ENCODE measurements at regions of chr10 and their contacts with region 1.

Region 1: DNA sequence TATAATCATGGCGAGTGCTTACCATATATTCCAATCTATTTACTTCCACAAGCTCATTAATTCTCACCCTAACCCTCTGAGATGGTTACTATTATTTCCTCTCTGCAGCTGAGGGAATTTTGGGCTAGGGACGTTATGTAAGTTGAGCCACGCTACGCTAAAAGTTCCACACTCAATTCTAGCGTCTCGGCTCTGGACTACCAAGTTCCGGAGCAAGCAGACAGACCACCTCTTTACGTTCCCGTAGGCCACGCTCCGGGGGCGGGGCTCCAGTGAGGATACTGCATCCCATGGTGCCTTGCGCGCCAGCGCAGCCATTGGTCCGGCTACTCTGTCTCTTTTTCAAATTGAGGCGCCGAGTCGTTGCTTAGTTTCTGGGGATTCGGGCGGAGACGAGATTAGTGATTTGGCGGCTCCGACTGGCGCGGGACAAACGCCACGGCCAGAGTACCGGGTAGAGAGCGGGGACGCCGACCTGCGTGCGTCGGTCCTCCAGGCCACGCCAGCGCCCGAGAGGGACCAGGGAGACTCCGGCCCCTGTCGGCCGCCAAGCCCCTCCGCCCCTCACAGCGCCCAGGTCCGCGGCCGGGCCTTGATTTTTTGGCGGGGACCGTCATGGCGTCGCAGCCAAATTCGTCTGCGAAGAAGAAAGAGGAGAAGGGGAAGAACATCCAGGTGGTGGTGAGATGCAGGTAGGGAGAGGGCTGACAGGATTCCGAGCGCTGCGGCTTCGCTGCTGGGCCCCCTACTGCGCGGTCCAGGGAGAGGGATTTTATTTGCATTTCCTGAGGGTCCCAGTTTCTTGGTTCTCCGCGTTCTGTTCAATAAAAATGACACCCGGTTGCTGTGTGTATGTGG is at the start of gene KIF11:
- DNase-seq: peak; percentile 94 to 99 (median 96)
- ATAC-seq: peak; percentile 87
- H3K4me3 ChIP-seq: peak within 1 kb of the TSS; percentile 62 to 82
- H3K4me3 Mint-ChIP-seq: peak within 1 kb of the TSS; percentile 97
- H3K27ac ChIP-seq: peak within 1 kb of the TSS; percentile 72 to 90
- H3K27ac Mint-ChIP-seq: peak within 1 kb of the TSS; percentile 99
- H3K4me1 ChIP-seq: peaks cover 20% of the 10 kb centered on the region
- H3K4me1 Mint-ChIP-seq: peaks cover 28% of the 10 kb centered on the region
- H3K27me3 ChIP-seq: no peaks in the 10 kb centered on the region
- H3K27me3 Mint-ChIP-seq: peaks cover 5% of the 10 kb centered on the region
- CTCF ChIP-seq: no peak
- total RNA-seq, gene KIF11: 0.36 to 0.38 TPM

Region 2: DNA sequence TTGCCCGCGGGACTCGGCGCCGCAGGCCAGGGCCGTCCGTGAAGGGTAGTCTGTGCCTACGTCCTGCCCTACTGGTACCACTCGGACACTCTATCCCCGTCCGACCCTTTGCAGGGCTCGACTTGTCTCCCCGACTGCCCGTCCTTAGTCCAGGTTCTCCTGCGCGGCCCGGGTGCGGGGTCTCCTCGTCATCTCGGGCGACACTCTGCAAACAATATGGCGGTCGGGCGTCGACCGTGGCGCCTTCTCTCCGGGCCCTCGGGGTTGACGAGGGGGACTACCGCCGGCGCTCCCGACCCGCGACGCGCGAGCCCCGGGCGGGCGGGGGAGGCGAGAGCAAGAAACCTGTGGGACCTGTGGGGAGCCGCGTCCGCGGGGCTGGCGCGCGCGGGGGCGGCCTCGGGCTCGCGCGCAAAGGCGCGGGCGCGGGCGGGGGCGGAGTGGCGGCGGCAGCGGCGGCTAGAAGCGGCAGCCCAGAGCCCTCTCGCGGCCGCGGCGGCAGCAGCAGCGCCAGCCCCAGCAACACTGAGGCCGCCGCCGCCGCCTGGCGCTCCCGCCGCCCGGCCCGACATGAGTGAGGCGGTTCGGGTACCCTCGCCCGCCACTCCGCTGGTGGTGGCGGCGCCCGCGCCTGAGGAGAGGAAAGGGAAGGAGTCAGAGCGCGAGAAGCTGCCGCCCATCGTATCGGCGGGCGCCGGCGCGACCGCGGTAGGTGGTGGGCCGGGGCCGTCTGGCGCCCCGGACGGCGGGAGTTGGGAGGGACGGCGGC is 1182.9 kb before region 1 on chr10 and contains the start of gene HECTD2:
- CTCF ChIA-PET with region 1: no interaction called
- POLR2A ChIA-PET with region 1: no interaction called
- intact Hi-C with region 1: loop called in 1 of 2 experiments (anchors 5 kb)
- DNase-seq: peak; percentile 65 to 92 (median 82)
- ATAC-seq: peak; percentile 86
- H3K4me3 ChIP-seq: peak within 1 kb of the TSS; percentile 91 to 97
- H3K4me3 Mint-ChIP-seq: peak within 1 kb of the TSS; percentile 86
- H3K27ac ChIP-seq: peak within 1 kb of the TSS; percentile 90 to 95
- H3K27ac Mint-ChIP-seq: peak within 1 kb of the TSS; percentile 90
- H3K4me1 ChIP-seq: peaks cover 12% of the 10 kb centered on the region
- H3K4me1 Mint-ChIP-seq: peaks cover 13% of the 10 kb centered on the region
- H3K27me3 ChIP-seq: no peaks in the 10 kb centered on the region
- H3K27me3 Mint-ChIP-seq: no peaks in the 10 kb centered on the region
- CTCF ChIP-seq: peak; percentile 41
- total RNA-seq, gene HECTD2: 0.69 to 1.5 TPM

Region 3: GRCh38 chr10:91901784-91902677 is 691.0 kb before region 1 on chr10:
- CTCF ChIA-PET with region 1: no interaction called
- POLR2A ChIA-PET with region 1: no interaction called
- intact Hi-C with region 1: loop called in 1 of 2 experiments (anchors 1 kb)
- DNase-seq: peak in 6 of 9 experiments; percentile 32 to 78 (median 59)
- ATAC-seq: peak; percentile 98
- H3K4me3 ChIP-seq: no peak overlapping the region
- H3K4me3 Mint-ChIP-seq: no peak overlapping the region
- H3K27ac ChIP-seq: peak overlapping the region in 1 of 2 experiments; percentile 75
- H3K27ac Mint-ChIP-seq: peak overlapping the region; percentile 53
- H3K4me1 ChIP-seq: peaks cover 6% of the 10 kb centered on the region
- H3K4me1 Mint-ChIP-seq: peaks cover 23% of the 10 kb centered on the region
- H3K27me3 ChIP-seq: no peaks in the 10 kb centered on the region
- H3K27me3 Mint-ChIP-seq: peaks cover 3% of the 10 kb centered on the region
- CTCF ChIP-seq: no peak

Region 4: GRCh38 chr10:92240289-92241157 is 352.5 kb before region 1 on chr10:
- CTCF ChIA-PET with region 1: no interaction called
- POLR2A ChIA-PET with region 1: no interaction called
- intact Hi-C with region 1: loop called in 1 of 2 experiments (anchors 5 kb)
- DNase-seq: peak in 8 of 9 experiments; percentile 14 to 74 (median 32)
- ATAC-seq: peak; percentile 43
- H3K4me3 ChIP-seq: peak overlapping the region; percentile 65 to 82
- H3K4me3 Mint-ChIP-seq: peak overlapping the region; percentile 95
- H3K27ac ChIP-seq: peak overlapping the region; percentile 3 to 56
- H3K27ac Mint-ChIP-seq: peak overlapping the region; percentile 81
- H3K4me1 ChIP-seq: peaks cover 22% of the 10 kb centered on the region
- H3K4me1 Mint-ChIP-seq: peaks cover 40% of the 10 kb centered on the region
- H3K27me3 ChIP-seq: no peaks in the 10 kb centered on the region
- H3K27me3 Mint-ChIP-seq: no peaks in the 10 kb centered on the region
- CTCF ChIP-seq: no peak

Region 5: DNA sequence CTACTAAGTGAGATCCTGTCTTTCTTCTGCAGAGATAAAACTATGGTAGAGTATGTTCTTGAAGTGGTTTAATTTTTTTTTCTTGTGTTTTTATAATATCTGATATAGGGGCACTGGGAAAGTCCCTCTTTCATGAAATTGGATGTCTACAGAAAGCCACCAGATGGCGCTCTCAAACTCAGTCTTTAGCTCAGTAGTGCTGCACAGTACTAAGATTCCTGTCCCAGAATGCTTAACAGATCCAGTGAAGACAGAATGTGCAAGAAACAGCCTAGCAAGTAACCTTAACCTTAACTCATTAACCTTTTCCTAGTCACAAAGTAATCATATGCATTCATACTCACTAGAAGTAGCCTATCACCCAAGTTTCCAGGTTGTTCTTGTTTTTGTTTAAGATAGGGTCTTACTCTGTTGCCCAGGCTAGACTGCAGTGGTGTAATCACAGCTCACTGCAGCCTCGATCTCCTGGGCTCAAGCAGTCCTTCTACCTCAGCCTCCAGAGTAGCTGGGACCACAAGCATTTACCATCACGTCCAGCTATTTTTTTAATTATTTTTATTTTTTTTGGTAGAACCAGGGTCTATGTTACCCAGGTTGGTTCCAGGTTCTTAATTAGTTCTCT is 75.8 kb before region 1 on chr10:
- CTCF ChIA-PET with region 1: interaction called, 6 read pairs
- POLR2A ChIA-PET with region 1: no interaction called
- intact Hi-C with region 1: loop called (anchors 1 to 5 kb)
- DNase-seq: peak; percentile 38 to 89 (median 73)
- ATAC-seq: peak; percentile 99
- H3K4me3 ChIP-seq: no peak overlapping the region
- H3K4me3 Mint-ChIP-seq: no peak overlapping the region
- H3K27ac ChIP-seq: peak overlapping the region in 1 of 2 experiments; percentile 7
- H3K27ac Mint-ChIP-seq: no peak overlapping the region
- H3K4me1 ChIP-seq: no peaks in the 10 kb centered on the region
- H3K4me1 Mint-ChIP-seq: peaks cover 8% of the 10 kb centered on the region
- H3K27me3 ChIP-seq: no peaks in the 10 kb centered on the region
- H3K27me3 Mint-ChIP-seq: no peaks in the 10 kb centered on the region
- CTCF ChIP-seq: peak; percentile 81

Region 6: GRCh38 chr10:93482145-93482834 is 889.3 kb after region 1 on chr10 and contains the start of gene MYOF:
- CTCF ChIA-PET with region 1: no interaction called
- POLR2A ChIA-PET with region 1: no interaction called
- intact Hi-C with region 1: no loop called
- DNase-seq: peak; percentile 10 to 79 (median 34)
- ATAC-seq: peak; percentile 95
- H3K4me3 ChIP-seq: peak within 1 kb of the TSS; percentile 38 to 44
- H3K4me3 Mint-ChIP-seq: peak within 1 kb of the TSS; percentile 84
- H3K27ac ChIP-seq: no peak within 1 kb of the TSS
- H3K27ac Mint-ChIP-seq: no peak within 1 kb of the TSS
- H3K4me1 ChIP-seq: peaks cover 6% of the 10 kb centered on the region
- H3K4me1 Mint-ChIP-seq: peaks cover 6% of the 10 kb centered on the region
- H3K27me3 ChIP-seq: peaks cover 3 to 10% of the 10 kb centered on the region in 2 experiments
- H3K27me3 Mint-ChIP-seq: peaks cover 31% of the 10 kb centered on the region
- CTCF ChIP-seq: peak; percentile 81
- total RNA-seq, gene MYOF: not detected

Region 7: GRCh38 chr10:93496322-93497041 is 903.5 kb after region 1 on chr10 and contains the start of gene CEP55:
- CTCF ChIA-PET with region 1: no interaction called
- POLR2A ChIA-PET with region 1: no interaction called
- intact Hi-C with region 1: loop called in 1 of 2 experiments (anchors 5 kb)
- DNase-seq: peak; percentile 90 to 96 (median 95)
- ATAC-seq: peak; percentile 99
- H3K4me3 ChIP-seq: peak within 1 kb of the TSS; percentile 87 to 97
- H3K4me3 Mint-ChIP-seq: peak within 1 kb of the TSS; percentile 90
- H3K27ac ChIP-seq: peak within 1 kb of the TSS in 1 of 2 experiments; percentile 54
- H3K27ac Mint-ChIP-seq: no peak within 1 kb of the TSS
- H3K4me1 ChIP-seq: peaks cover 10% of the 10 kb centered on the region
- H3K4me1 Mint-ChIP-seq: peaks cover 14% of the 10 kb centered on the region
- H3K27me3 ChIP-seq: no peaks in the 10 kb centered on the region
- H3K27me3 Mint-ChIP-seq: peaks cover 10% of the 10 kb centered on the region
- CTCF ChIP-seq: no peak
- total RNA-seq, gene CEP55: 0.16 TPM in 1 of 2 experiments, not detected in the other

Region 8: DNA sequence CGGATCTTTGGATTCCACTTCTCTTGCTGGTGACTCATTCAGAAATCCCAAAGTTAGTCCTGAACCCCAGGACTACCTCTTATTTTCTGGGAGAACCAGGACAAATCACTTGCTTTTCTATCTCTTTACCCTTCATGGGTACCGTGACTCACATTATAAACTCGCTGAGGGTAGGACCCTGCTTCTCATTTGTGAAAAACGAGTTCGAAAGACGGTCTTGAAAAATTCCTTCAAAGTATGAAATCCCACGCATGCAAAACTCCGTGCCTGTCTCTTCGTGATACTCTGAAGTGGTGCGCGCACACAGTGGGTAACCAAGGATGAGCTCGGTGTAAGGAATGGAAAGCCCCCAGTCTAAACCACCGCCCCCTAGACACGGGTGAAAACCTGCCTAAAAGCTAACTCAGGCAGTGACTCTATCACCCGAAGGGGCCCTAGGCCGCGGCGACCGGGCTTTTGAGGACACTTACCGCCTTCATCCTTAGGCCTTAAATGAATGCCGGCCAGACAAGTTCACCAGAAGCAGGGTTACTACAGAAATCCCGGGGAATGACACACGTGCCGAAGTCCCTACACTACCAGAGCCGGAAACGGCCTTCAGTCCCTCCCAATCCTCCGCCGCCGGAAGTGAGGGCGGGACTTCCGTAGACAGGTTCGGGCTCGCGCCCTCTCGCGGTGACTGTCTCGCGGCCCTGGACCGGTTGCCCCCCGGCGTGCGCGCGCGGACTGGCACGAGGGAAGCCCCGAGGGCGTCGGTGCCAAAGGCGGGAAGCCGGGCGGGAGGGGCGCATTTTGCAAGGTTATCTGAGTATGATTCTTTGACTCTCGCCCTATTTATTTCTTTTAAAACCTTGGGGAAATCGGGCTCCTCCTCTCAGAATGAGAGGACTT is 1769.6 kb after region 1 on chr10 and contains the start of gene NOC3L:
- CTCF ChIA-PET with region 1: no interaction called
- POLR2A ChIA-PET with region 1: no interaction called
- intact Hi-C with region 1: loop called in 1 of 2 experiments (anchors 10 kb)
- DNase-seq: peak; percentile 87 to 98 (median 96)
- ATAC-seq: peak; percentile 92
- H3K4me3 ChIP-seq: peak within 1 kb of the TSS; percentile 75 to 89
- H3K4me3 Mint-ChIP-seq: peak within 1 kb of the TSS; percentile 97
- H3K27ac ChIP-seq: peak within 1 kb of the TSS; percentile 66 to 89
- H3K27ac Mint-ChIP-seq: peak within 1 kb of the TSS; percentile 99
- H3K4me1 ChIP-seq: peaks cover 19% of the 10 kb centered on the region
- H3K4me1 Mint-ChIP-seq: peaks cover 40% of the 10 kb centered on the region
- H3K27me3 ChIP-seq: no peaks in the 10 kb centered on the region
- H3K27me3 Mint-ChIP-seq: peaks cover 5% of the 10 kb centered on the region
- CTCF ChIP-seq: peak; percentile 65
- total RNA-seq, gene NOC3L: 7.4 to 8.3 TPM